Activated naive CD4-positive, alpha-beta T cell treated with anti-CD3 and anti-CD28 coated beads for 36 hours (primary cell): ENCODE measurements at regions of chr17 and their contacts with region 1.

Region 1: GRCh38 chr17:7561028-7561575 is 617 bp upstream of the SENP3 start:
- DNase-seq: peak; percentile 89
- H3K4me3 Mint-ChIP-seq: peak overlapping the region; percentile 87
- H3K27ac Mint-ChIP-seq: peak overlapping the region; percentile 84
- H3K4me1 Mint-ChIP-seq: peaks cover 57% of the 10 kb centered on the region
- H3K27me3 Mint-ChIP-seq: no peaks in the 10 kb centered on the region

Region 2: DNA sequence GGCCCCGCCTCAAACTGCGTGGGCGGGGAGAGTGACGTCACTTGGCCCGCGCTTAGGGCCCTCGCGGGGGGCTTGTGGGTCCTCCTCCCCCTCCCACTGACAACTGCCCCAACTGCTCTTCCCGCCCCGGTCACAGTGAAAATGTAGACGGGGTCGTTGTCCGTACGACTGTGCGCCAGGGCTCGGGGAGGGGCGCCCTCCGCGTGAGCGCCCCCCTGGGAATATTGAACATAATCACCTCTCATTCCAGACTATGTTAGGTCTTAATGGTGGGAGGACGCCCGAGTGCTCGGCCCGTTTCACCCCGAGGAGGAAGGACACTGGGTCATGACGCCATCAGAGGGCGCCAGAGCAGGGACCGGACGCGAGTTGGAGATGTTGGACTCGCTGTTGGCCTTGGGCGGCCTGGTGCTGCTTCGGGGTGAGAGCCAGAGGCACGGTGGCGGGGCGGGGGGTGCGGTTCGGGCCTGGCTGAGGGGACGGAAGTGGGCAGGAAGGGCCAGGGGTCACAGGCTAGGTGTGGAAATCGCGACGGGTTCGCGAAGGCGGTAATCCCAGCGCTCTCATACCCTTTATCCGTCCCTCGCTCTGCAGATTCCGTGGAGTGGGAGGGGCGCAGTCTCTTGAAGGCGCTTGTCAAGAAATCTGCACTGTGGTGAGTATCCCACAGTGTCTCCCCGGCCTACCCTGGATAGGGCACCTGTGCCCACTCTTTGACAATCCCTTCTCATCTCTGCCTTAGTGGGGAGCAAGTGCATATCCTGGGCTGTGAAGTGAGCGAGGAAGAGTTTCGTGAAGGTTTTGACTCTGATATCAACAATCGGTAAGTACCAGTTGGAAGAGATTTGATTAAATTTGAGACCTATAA is 308.7 kb before region 1 on chr17 and contains the start of gene ELP5:
- CTCF ChIA-PET with region 1: no interaction called
- intact Hi-C with region 1: loop called (anchors 1 kb)
- DNase-seq: peak; percentile 93
- H3K4me3 Mint-ChIP-seq: peak within 1 kb of the TSS; percentile 86
- H3K27ac Mint-ChIP-seq: peak within 1 kb of the TSS; percentile 99
- H3K4me1 Mint-ChIP-seq: peaks cover 34% of the 10 kb centered on the region
- H3K27me3 Mint-ChIP-seq: no peaks in the 10 kb centered on the region
- total RNA-seq, gene ELP5: 52.4 to 53.5 TPM

Region 3: GRCh38 chr17:7351665-7352501 is 209.2 kb before region 1 on chr17 and contains the start of gene KCTD11:
- CTCF ChIA-PET with region 1: interaction called, 27 read pairs
- intact Hi-C with region 1: loop called (anchors 1 kb)
- DNase-seq: peak; percentile 76
- H3K4me3 Mint-ChIP-seq: peak within 1 kb of the TSS; percentile 62
- H3K27ac Mint-ChIP-seq: peak within 1 kb of the TSS; percentile 51
- H3K4me1 Mint-ChIP-seq: peaks cover 43% of the 10 kb centered on the region
- H3K27me3 Mint-ChIP-seq: no peaks in the 10 kb centered on the region
- total RNA-seq, gene KCTD11: 0.41 to 0.47 TPM

Region 4: GRCh38 chr17:7435221-7435675 is 125.9 kb before region 1 on chr17 and contains the start of gene TMEM102:
- CTCF ChIA-PET with region 1: interaction called, 17 read pairs
- intact Hi-C with region 1: loop called (anchors 1 kb)
- DNase-seq: peak; percentile 99
- H3K4me3 Mint-ChIP-seq: peak within 1 kb of the TSS; percentile 92
- H3K27ac Mint-ChIP-seq: peak within 1 kb of the TSS; percentile 91
- H3K4me1 Mint-ChIP-seq: peaks cover 36% of the 10 kb centered on the region
- H3K27me3 Mint-ChIP-seq: peaks cover 12% of the 10 kb centered on the region
- total RNA-seq, gene TMEM102: 3.3 to 3.5 TPM

Region 5: DNA sequence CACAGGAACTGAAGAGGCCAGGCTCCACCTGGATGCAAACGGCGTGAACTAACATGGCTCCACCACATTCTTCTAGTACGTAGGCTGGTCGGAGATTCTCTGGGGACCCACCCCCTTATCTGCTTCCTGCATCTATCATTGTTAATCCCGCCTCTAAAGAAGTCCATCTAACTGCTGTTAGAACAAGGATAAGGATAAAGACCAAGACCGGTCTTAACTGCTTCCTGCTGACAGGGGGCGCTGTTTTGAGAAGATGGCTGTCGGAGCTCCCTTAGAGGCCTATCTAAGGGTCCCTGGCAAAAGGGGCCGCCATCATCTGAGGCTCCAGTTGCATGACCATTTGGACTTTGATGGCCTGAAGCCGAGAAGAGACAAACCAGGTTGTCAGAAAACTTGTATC is 38.1 kb before region 1 on chr17:
- CTCF ChIA-PET with region 1: interaction called, 31 read pairs
- intact Hi-C with region 1: loop called (anchors 1 kb)
- DNase-seq: peak; percentile 62
- H3K4me3 Mint-ChIP-seq: no peak overlapping the region
- H3K27ac Mint-ChIP-seq: no peak overlapping the region
- H3K4me1 Mint-ChIP-seq: no peaks in the 10 kb centered on the region
- H3K27me3 Mint-ChIP-seq: no peaks in the 10 kb centered on the region

Region 6: GRCh38 chr17:7572588-7573323 is 11.7 kb after region 1 on chr17:
- CTCF ChIA-PET with region 1: interaction called, 26 read pairs
- intact Hi-C with region 1: loop called (anchors 1 kb)
- DNase-seq: peak; percentile 100
- H3K4me3 Mint-ChIP-seq: peak overlapping the region; percentile 85
- H3K27ac Mint-ChIP-seq: peak overlapping the region; percentile 99
- H3K4me1 Mint-ChIP-seq: peaks cover 55% of the 10 kb centered on the region
- H3K27me3 Mint-ChIP-seq: no peaks in the 10 kb centered on the region

Region 7: GRCh38 chr17:7589204-7589868 is 28.2 kb after region 1 on chr17:
- CTCF ChIA-PET with region 1: interaction called, 13 read pairs
- intact Hi-C with region 1: no loop called
- DNase-seq: peak; percentile 74
- H3K4me3 Mint-ChIP-seq: no peak overlapping the region
- H3K27ac Mint-ChIP-seq: no peak overlapping the region
- H3K4me1 Mint-ChIP-seq: peaks cover 21% of the 10 kb centered on the region
- H3K27me3 Mint-ChIP-seq: no peaks in the 10 kb centered on the region

Region 8: GRCh38 chr17:7695586-7695985 is 134.5 kb after region 1 on chr17:
- CTCF ChIA-PET with region 1: no interaction called
- intact Hi-C with region 1: no loop called
- DNase-seq: no peak
- H3K4me3 Mint-ChIP-seq: no peak overlapping the region
- H3K27ac Mint-ChIP-seq: no peak overlapping the region
- H3K4me1 Mint-ChIP-seq: peaks cover 1% of the 10 kb centered on the region
- H3K27me3 Mint-ChIP-seq: no peaks in the 10 kb centered on the region

Region 9: GRCh38 chr17:7782237-7782636 is 221.1 kb after region 1 on chr17:
- CTCF ChIA-PET with region 1: no interaction called
- intact Hi-C with region 1: no loop called
- DNase-seq: no peak
- H3K4me3 Mint-ChIP-seq: no peak overlapping the region
- H3K27ac Mint-ChIP-seq: no peak overlapping the region
- H3K4me1 Mint-ChIP-seq: no peaks in the 10 kb centered on the region
- H3K27me3 Mint-ChIP-seq: peaks cover 2% of the 10 kb centered on the region